K562 (cell line): ENCODE measurements at regions of chr3 and their contacts with region 1.

Region 1: GRCh38 chr3:2446146-2446545 is 347.5 kb downstream of the CNTN4 start:
- DNase-seq: no peak
- ATAC-seq: no peak
- H3K4me3 ChIP-seq: no peak overlapping the region
- H3K27ac ChIP-seq: no peak overlapping the region
- H3K4me1 ChIP-seq: no peaks in the 10 kb centered on the region
- H3K27me3 ChIP-seq: no peaks in the 10 kb centered on the region
- CTCF ChIP-seq: no peak
- EP300 ChIP-seq: no peak
- POLR2A ChIP-seq: no peak
- RAD21 ChIP-seq: no peak

Region 2: DNA sequence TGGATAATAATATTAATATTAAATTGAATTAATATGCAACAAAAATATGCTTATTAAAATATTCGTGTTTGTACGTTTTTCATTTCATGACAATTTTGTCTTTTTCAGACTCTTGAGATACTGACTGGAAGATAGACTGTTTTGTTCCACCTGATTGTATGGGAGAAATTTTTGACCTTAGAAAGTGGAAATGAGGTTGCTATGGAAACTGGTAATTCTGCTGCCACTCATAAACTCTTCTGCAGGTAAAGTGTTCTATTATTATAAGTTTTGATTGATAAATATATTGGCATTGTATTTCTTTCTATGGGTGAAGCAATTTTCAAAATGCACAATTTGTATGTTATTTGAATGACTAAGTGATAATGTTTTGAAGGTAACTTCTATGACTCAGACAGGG is 1298.3 kb before region 1 on chr3:
- CTCF ChIA-PET with region 1: interaction called, 12 read pairs
- POLR2A ChIA-PET with region 1: no interaction called
- in situ Hi-C with region 1: no loop called
- intact Hi-C with region 1: no loop called
- DNase-seq: no peak
- ATAC-seq: no peak
- H3K4me3 ChIP-seq: no peak overlapping the region
- H3K27ac ChIP-seq: no peak overlapping the region
- H3K4me1 ChIP-seq: no peaks in the 10 kb centered on the region
- H3K27me3 ChIP-seq: no peaks in the 10 kb centered on the region
- CTCF ChIP-seq: no peak
- EP300 ChIP-seq: no peak
- POLR2A ChIP-seq: no peak
- RAD21 ChIP-seq: no peak

Region 3: GRCh38 chr3:2274526-2274925 is 171.6 kb before region 1 on chr3:
- CTCF ChIA-PET with region 1: no interaction called
- POLR2A ChIA-PET with region 1: no interaction called
- in situ Hi-C with region 1: no loop called
- intact Hi-C with region 1: no loop called
- DNase-seq: no peak
- ATAC-seq: no peak
- H3K4me3 ChIP-seq: no peak overlapping the region
- H3K27ac ChIP-seq: no peak overlapping the region
- H3K4me1 ChIP-seq: no peaks in the 10 kb centered on the region
- H3K27me3 ChIP-seq: no peaks in the 10 kb centered on the region
- CTCF ChIP-seq: no peak
- EP300 ChIP-seq: no peak
- POLR2A ChIP-seq: no peak
- RAD21 ChIP-seq: no peak